Naive thymus-derived CD4-positive, alpha-beta T cell (primary cell): ENCODE measurements at regions of chr15 and their contacts with region 1.

Region 1: GRCh38 chr15:50145451-50145872 is 26.4 kb upstream of the ATP8B4 start:
- DNase-seq: peak in 6 of 9 donors; percentile 7 to 47 (median 36)
- ATAC-seq: peak; percentile 60
- H3K4me3 ChIP-seq: no peak overlapping the region
- H3K4me3 Mint-ChIP-seq: no peak overlapping the region
- H3K27ac ChIP-seq: no peak overlapping the region
- H3K27ac Mint-ChIP-seq: peak overlapping the region in 1 of 9 donors; percentile 66
- H3K4me1 ChIP-seq: no peaks in the 10 kb centered on the region
- H3K4me1 Mint-ChIP-seq: peaks cover 0 to 30% (median 0%) of the 10 kb centered on the region in 7 donors
- H3K27me3 ChIP-seq: no peaks in the 10 kb centered on the region
- H3K27me3 Mint-ChIP-seq: peaks cover 0 to 3% (median 0%) of the 10 kb centered on the region in 5 donors

Region 2: GRCh38 chr15:49145651-49146609 is 999.5 kb before region 1 on chr15:
- CTCF ChIA-PET with region 1: interaction called, 3 read pairs
- POLR2A ChIA-PET with region 1: no interaction called
- intact Hi-C with region 1: loop called in 1 of 2 experiments (anchors 1 kb)
- DNase-seq: peak in 6 of 9 donors; percentile 18 to 49 (median 28)
- ATAC-seq: peak; percentile 76
- H3K4me3 ChIP-seq: no peak overlapping the region
- H3K4me3 Mint-ChIP-seq: peak overlapping the region in 1 of 10 donors; percentile 44
- H3K27ac ChIP-seq: no peak overlapping the region
- H3K27ac Mint-ChIP-seq: peak overlapping the region in 4 of 9 donors; percentile 1 to 63 (median 42)
- H3K4me1 ChIP-seq: peaks cover 8 to 14% of the 10 kb centered on the region in 2 donors
- H3K4me1 Mint-ChIP-seq: peaks cover 22 to 74% (median 50%) of the 10 kb centered on the region in 7 donors
- H3K27me3 ChIP-seq: no peaks in the 10 kb centered on the region
- H3K27me3 Mint-ChIP-seq: no peaks in the 10 kb centered on the region

Region 3: GRCh38 chr15:49235446-49236124 is 909.9 kb before region 1 on chr15:
- CTCF ChIA-PET with region 1: interaction called, 3 read pairs
- POLR2A ChIA-PET with region 1: interaction called, 4 read pairs
- intact Hi-C with region 1: loop called in 1 of 2 experiments (anchors 1 kb)
- DNase-seq: peak in 7 of 9 donors; percentile 13 to 51 (median 44)
- ATAC-seq: peak; percentile 87
- H3K4me3 ChIP-seq: no peak overlapping the region
- H3K4me3 Mint-ChIP-seq: no peak overlapping the region
- H3K27ac ChIP-seq: no peak overlapping the region
- H3K27ac Mint-ChIP-seq: peak overlapping the region in 4 of 9 donors; percentile 6 to 67 (median 41)
- H3K4me1 ChIP-seq: no peaks in the 10 kb centered on the region
- H3K4me1 Mint-ChIP-seq: peaks cover 0 to 24% (median 13%) of the 10 kb centered on the region in 7 donors
- H3K27me3 ChIP-seq: no peaks in the 10 kb centered on the region
- H3K27me3 Mint-ChIP-seq: no peaks in the 10 kb centered on the region

Region 4: GRCh38 chr15:49876401-49877038 is 268.9 kb before region 1 on chr15:
- CTCF ChIA-PET with region 1: no interaction called
- POLR2A ChIA-PET with region 1: no interaction called
- intact Hi-C with region 1: loop called in 1 of 2 experiments (anchors 2 kb)
- DNase-seq: no peak
- ATAC-seq: no peak
- H3K4me3 ChIP-seq: no peak overlapping the region
- H3K4me3 Mint-ChIP-seq: no peak overlapping the region
- H3K27ac ChIP-seq: no peak overlapping the region
- H3K27ac Mint-ChIP-seq: peak overlapping the region in 1 of 9 donors; percentile 30
- H3K4me1 ChIP-seq: no peaks in the 10 kb centered on the region
- H3K4me1 Mint-ChIP-seq: peaks cover 0 to 3% (median 0%) of the 10 kb centered on the region in 7 donors
- H3K27me3 ChIP-seq: no peaks in the 10 kb centered on the region
- H3K27me3 Mint-ChIP-seq: peaks cover 0 to 3% (median 0%) of the 10 kb centered on the region in 5 donors